Activated CD4-positive, alpha-beta memory T cell treated with anti-CD3 and anti-CD28 coated beads for 36 hours (primary cell): ENCODE measurements at regions of chr1 and their contacts with region 1.

Region 1: GRCh38 chr1:110034451-110035235 is at the start of gene STRIP1:
- DNase-seq: peak; percentile 95
- H3K4me3 Mint-ChIP-seq: peak within 1 kb of the TSS; percentile 82
- H3K27ac Mint-ChIP-seq: peak within 1 kb of the TSS; percentile 92
- H3K4me1 Mint-ChIP-seq: peaks cover 59% of the 10 kb centered on the region
- H3K27me3 Mint-ChIP-seq: no peaks in the 10 kb centered on the region
- total RNA-seq, gene STRIP1: 22.7 to 25.7 TPM

Region 2: GRCh38 chr1:109548321-109549267 is 486.0 kb before region 1 on chr1 and contains the start of gene GNAI3:
- CTCF ChIA-PET with region 1: interaction called, 5 read pairs
- POLR2A ChIA-PET with region 1: no interaction called
- intact Hi-C with region 1: loop called (anchors 5 kb)
- DNase-seq: peak; percentile 98
- H3K4me3 Mint-ChIP-seq: peak within 1 kb of the TSS; percentile 86
- H3K27ac Mint-ChIP-seq: peak within 1 kb of the TSS; percentile 94
- H3K4me1 Mint-ChIP-seq: peaks cover 41% of the 10 kb centered on the region
- H3K27me3 Mint-ChIP-seq: no peaks in the 10 kb centered on the region
- total RNA-seq, gene GNAI3: 9.2 to 9.9 TPM

Region 3: DNA sequence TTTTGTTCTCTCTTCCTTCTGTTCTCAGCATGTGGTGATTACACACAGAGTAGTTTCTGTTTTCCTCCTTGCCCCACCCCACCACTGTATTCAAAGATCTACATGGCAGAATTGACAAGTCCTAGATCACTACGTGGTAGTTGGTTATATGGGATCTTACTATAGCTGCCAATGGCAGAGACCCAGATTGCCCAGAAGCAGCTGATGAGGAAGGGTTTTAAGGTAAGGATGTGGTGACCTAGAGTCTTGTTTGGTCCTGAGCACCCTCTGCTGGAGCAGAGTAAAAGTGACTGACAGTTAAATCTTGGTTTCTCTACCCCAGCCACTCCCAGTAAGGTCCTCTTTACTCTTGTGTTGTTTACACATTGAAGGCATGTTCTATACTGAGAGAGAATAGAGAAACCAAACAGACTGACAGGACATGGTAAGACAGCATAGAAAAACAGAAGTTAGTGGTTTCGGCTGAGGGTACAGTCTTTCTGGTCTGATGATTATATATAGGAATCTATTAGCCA is 23.1 kb before region 1 on chr1:
- CTCF ChIA-PET with region 1: interaction called, 20 read pairs
- POLR2A ChIA-PET with region 1: no interaction called
- intact Hi-C with region 1: no loop called
- DNase-seq: peak; percentile 39
- H3K4me3 Mint-ChIP-seq: no peak overlapping the region
- H3K27ac Mint-ChIP-seq: no peak overlapping the region
- H3K4me1 Mint-ChIP-seq: no peaks in the 10 kb centered on the region
- H3K27me3 Mint-ChIP-seq: no peaks in the 10 kb centered on the region

Region 4: GRCh38 chr1:110053557-110054428 is 19.1 kb after region 1 on chr1:
- CTCF ChIA-PET with region 1: interaction called, 186 read pairs
- POLR2A ChIA-PET with region 1: interaction called, 3 read pairs
- intact Hi-C with region 1: no loop called
- DNase-seq: peak; percentile 79
- H3K4me3 Mint-ChIP-seq: no peak overlapping the region
- H3K27ac Mint-ChIP-seq: no peak overlapping the region
- H3K4me1 Mint-ChIP-seq: no peaks in the 10 kb centered on the region
- H3K27me3 Mint-ChIP-seq: no peaks in the 10 kb centered on the region

Region 5: GRCh38 chr1:110087812-110088738 is 53.4 kb after region 1 on chr1:
- CTCF ChIA-PET with region 1: interaction called, 10 read pairs
- POLR2A ChIA-PET with region 1: no interaction called
- intact Hi-C with region 1: loop called (anchors 2 kb)
- DNase-seq: peak; percentile 52
- H3K4me3 Mint-ChIP-seq: no peak overlapping the region
- H3K27ac Mint-ChIP-seq: no peak overlapping the region
- H3K4me1 Mint-ChIP-seq: peaks cover 12% of the 10 kb centered on the region
- H3K27me3 Mint-ChIP-seq: peaks cover 44% of the 10 kb centered on the region

Region 6: GRCh38 chr1:110125810-110126209 is 91.2 kb after region 1 on chr1:
- CTCF ChIA-PET with region 1: no interaction called
- POLR2A ChIA-PET with region 1: no interaction called
- intact Hi-C with region 1: no loop called
- DNase-seq: no peak
- H3K4me3 Mint-ChIP-seq: no peak overlapping the region
- H3K27ac Mint-ChIP-seq: no peak overlapping the region
- H3K4me1 Mint-ChIP-seq: no peaks in the 10 kb centered on the region
- H3K27me3 Mint-ChIP-seq: peaks cover 27% of the 10 kb centered on the region

Region 7: DNA sequence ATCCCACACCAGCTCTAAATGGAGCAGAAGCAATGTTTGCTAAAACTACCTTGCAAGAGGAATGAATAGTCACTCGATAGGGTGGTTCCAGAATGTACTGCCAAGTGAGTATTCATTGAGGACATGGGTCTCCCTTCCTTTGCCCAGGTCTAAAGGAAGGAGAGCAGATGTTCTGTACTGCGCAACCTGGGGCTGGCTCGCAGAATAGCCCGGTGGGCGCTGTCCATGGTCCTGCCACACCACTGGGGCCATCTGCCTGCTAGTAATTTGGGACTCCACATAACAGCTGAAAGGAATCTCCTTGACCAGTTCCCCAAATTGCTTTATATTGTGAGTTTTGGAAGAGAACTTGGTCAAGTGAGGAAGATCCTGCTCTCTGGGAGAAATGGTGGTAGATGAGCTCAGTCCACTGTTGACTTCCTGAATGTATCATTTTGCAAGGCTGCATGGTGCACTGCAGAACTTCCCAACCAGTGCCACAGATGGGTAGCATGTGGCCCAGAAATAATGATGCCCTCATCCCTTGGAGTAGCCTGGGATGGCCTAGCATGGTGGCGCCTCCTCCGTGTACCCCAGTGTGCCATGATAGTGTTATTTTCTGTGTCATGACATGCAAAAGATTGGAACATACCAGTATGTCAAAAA is 121.4 kb after region 1 on chr1:
- CTCF ChIA-PET with region 1: no interaction called
- POLR2A ChIA-PET with region 1: no interaction called
- intact Hi-C with region 1: no loop called
- DNase-seq: peak; percentile 68
- H3K4me3 Mint-ChIP-seq: no peak overlapping the region
- H3K27ac Mint-ChIP-seq: no peak overlapping the region
- H3K4me1 Mint-ChIP-seq: no peaks in the 10 kb centered on the region
- H3K27me3 Mint-ChIP-seq: peaks cover 61% of the 10 kb centered on the region